Dendritic cell treated with granulocyte-macrophage colony-stimulating factor and Interleukin-4, amounts not matched to agents 40 ng/mL and 50 ng/mL, for 4 days (primary cell): ENCODE measurements at regions of chr5 and their contacts with region 1.

Region 1: DNA sequence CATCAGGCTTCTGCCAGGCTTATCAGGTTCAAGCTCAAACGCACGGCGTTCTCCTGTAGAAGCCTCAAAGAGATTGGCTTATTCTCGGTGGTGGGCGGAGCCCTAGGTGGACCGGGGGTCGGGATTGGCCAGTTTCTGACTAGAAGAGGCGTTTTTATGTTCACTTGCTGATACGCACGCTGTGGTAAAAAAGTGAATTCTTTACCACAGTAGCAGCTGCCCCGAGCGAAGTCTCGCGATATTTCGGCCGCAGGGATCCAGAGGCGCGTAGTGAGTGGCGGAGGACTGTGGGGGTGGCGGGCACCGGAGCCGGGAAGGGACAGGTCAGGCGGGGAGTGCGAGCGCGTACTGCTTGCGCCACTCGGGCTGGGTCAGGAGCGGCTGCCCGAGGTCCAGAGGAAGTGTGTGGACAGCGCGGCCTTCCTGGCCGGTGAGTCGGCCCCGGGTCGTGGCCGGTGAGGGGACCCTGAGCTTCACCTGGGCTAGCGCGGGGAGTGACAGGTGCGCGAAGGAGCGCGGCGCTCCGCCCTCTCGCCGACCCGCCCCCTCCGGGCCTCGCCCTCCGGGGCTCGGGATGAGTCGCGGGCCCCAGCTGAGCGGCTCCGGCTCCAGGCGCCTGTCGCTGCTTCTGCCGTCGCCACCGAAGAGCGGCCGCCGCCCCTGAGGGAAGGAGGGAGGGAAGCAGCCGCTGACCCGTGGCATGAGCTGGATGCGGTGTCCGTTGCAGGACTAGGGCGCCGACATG is at the start of gene DMXL1:
- H3K4me3 Mint-ChIP-seq: peak within 1 kb of the TSS; percentile 89
- H3K27ac Mint-ChIP-seq: peak within 1 kb of the TSS; percentile 97
- H3K4me1 Mint-ChIP-seq: peaks cover 42% of the 10 kb centered on the region
- H3K27me3 Mint-ChIP-seq: no peaks in the 10 kb centered on the region

Region 2: GRCh38 chr5:119022017-119022745 is 48.8 kb before region 1 on chr5:
- intact Hi-C with region 1: loop called (anchors 5 kb)
- H3K4me3 Mint-ChIP-seq: no peak overlapping the region
- H3K27ac Mint-ChIP-seq: peak overlapping the region; percentile 54
- H3K4me1 Mint-ChIP-seq: peaks cover 42% of the 10 kb centered on the region
- H3K27me3 Mint-ChIP-seq: no peaks in the 10 kb centered on the region

Region 3: DNA sequence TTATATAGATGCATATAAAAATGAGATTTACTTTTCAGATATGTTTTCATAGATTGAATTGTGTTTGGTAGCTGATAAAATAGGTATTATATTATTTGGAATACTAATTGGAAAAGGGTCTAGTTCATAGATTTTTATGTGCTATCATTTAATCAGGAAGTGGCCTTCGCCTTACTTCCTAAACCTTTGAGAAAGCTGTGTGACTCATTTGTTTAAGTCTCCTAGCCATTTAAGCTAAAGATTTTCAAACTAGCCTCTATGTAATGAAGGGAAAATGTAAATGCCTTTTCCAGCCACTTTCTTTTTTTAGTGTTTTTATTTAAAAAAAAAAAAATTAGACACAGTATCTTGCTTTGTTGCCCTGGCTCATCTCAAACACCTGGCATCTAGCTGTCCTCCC is 97.4 kb after region 1 on chr5:
- intact Hi-C with region 1: no loop called
- H3K4me3 Mint-ChIP-seq: no peak overlapping the region
- H3K27ac Mint-ChIP-seq: peak overlapping the region; percentile 77
- H3K4me1 Mint-ChIP-seq: peaks cover 6% of the 10 kb centered on the region
- H3K27me3 Mint-ChIP-seq: no peaks in the 10 kb centered on the region

Region 4: GRCh38 chr5:119267958-119268386 is 197.0 kb after region 1 on chr5:
- intact Hi-C with region 1: loop called (anchors 5 kb)
- H3K4me3 Mint-ChIP-seq: peak overlapping the region; percentile 91
- H3K27ac Mint-ChIP-seq: peak overlapping the region; percentile 94
- H3K4me1 Mint-ChIP-seq: peaks cover 56% of the 10 kb centered on the region
- H3K27me3 Mint-ChIP-seq: no peaks in the 10 kb centered on the region